ENCODE measurements at regions of chr9 and their contacts with region 1.

Region 1: GRCh38 chr9:127785023-127785932 is 556 bp upstream of the CDK9 start:
- DNase-seq: peak; percentile 92
- ATAC-seq: peak; percentile 56
- H3K4me3 Mint-ChIP-seq: peak overlapping the region; percentile 92
- H3K27ac Mint-ChIP-seq: peak overlapping the region; percentile 97
- H3K4me1 Mint-ChIP-seq: peaks cover 63% of the 10 kb centered on the region
- H3K27me3 Mint-ChIP-seq: no peaks in the 10 kb centered on the region
- CTCF ChIP-seq: peak; percentile 43

Region 2: GRCh38 chr9:127503947-127504782 is 281.1 kb before region 1 on chr9:
- CTCF ChIA-PET with region 1: interaction called, 3 read pairs
- POLR2A ChIA-PET with region 1: no interaction called
- intact Hi-C with region 1: loop called (anchors 1 kb)
- DNase-seq: peak; percentile 60
- ATAC-seq: peak; percentile 93
- H3K4me3 Mint-ChIP-seq: no peak overlapping the region
- H3K27ac Mint-ChIP-seq: no peak overlapping the region
- H3K4me1 Mint-ChIP-seq: no peaks in the 10 kb centered on the region
- H3K27me3 Mint-ChIP-seq: no peaks in the 10 kb centered on the region
- CTCF ChIP-seq: no peak

Region 3: DNA sequence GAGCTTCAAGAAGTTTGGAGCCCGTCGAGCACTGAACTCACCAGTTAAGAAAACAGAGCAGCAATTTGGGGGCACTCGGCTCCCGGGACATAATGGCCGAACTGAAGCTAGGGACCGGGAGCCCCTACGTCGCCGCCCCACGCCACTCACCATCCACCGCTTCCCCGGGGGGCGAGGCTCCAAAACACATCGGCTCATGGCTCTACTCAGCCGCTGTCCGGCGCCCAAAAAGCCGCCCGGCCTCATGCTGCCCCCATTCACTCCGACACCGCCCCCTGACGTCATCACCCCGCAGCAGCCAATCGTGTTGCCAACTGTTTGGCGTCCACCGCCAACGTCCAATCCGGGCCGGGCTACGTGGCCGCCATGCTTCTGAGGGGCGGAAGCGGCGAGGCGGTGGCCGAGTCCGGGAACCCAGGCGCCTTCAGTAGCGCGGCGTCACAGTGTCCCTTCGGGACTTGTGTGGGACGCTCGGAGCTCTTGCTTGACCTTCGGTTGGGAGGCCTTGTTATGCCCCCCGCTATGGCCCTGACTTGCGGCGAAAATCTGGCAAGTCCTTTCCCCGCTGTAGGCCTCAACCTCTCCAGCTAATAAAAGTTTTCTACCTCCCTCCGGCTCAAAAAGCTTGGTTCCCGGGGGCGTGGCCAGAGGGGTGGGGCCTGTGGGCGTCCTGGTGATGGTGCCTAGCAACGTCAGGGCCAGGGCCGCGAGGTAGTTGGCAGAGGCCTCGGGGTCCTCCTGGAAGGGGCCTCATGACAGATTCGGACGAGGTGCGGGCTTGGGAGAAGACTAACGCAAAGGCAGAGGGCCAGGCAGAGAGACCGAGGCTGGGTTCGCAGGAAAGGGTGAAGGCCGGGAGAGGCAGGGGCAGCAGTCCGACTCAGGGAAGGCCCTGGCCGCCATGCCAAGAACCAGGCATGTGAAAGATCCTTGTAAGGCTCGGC is 69.6 kb before region 1 on chr9 and contains the starts of genes PTRH1 and TTC16:
- CTCF ChIA-PET with region 1: no interaction called
- POLR2A ChIA-PET with region 1: no interaction called
- intact Hi-C with region 1: loop called (anchors 1 kb)
- DNase-seq: peak; percentile 97
- ATAC-seq: peak; percentile 96
- H3K4me3 Mint-ChIP-seq: peak within 1 kb of the TSS; percentile 100
- H3K27ac Mint-ChIP-seq: peak within 1 kb of the TSS; percentile 92
- H3K4me1 Mint-ChIP-seq: peaks cover 21% of the 10 kb centered on the region
- H3K27me3 Mint-ChIP-seq: no peaks in the 10 kb centered on the region
- CTCF ChIP-seq: no peak
- total RNA-seq, gene PTRH1: 12.7 and 13.8 TPM in 2 replicates
- total RNA-seq, gene TTC16: not detected in 2 replicates

Region 4: DNA sequence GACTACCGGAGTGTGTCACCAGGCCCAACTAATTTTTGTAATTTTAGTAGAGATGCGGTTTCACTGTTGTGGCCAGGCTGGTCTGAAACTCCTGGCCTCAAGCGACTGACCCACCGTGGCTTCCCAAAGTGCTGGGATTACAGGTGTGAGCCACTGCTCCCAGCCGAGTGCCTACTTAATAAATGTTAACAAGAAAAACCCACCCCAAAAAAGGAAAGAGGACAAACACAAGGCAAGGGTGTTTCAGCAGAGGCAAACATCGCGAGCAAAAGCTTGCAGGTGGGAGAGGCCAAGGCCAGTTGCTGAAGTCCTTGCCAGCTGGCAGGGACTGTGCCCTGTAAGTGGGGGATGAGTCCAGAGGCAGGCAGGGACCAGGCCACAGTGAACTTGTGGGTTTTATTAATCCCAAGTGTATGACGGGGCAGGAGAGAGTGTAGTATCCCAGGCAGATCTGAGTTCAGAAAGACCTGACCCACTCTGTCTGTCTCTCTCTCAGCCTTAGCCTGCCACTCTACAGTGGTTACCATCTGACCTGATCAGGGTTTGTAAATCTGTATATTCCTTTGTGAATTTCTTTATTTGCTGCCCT is 11.0 kb after region 1 on chr9:
- CTCF ChIA-PET with region 1: interaction called, 4 read pairs
- POLR2A ChIA-PET with region 1: interaction called, 14 read pairs
- intact Hi-C with region 1: loop called (anchors 1 kb)
- DNase-seq: no peak
- ATAC-seq: peak; percentile 45
- H3K4me3 Mint-ChIP-seq: peak overlapping the region; percentile 64
- H3K27ac Mint-ChIP-seq: peak overlapping the region; percentile 75
- H3K4me1 Mint-ChIP-seq: peaks cover 32% of the 10 kb centered on the region
- H3K27me3 Mint-ChIP-seq: no peaks in the 10 kb centered on the region
- CTCF ChIP-seq: no peak

Region 5: GRCh38 chr9:128047205-128047604 is 261.9 kb after region 1 on chr9:
- CTCF ChIA-PET with region 1: no interaction called
- POLR2A ChIA-PET with region 1: interaction called, 18 read pairs
- intact Hi-C with region 1: no loop called
- DNase-seq: no peak
- ATAC-seq: no peak
- H3K4me3 Mint-ChIP-seq: no peak overlapping the region
- H3K27ac Mint-ChIP-seq: no peak overlapping the region
- H3K4me1 Mint-ChIP-seq: no peaks in the 10 kb centered on the region
- H3K27me3 Mint-ChIP-seq: no peaks in the 10 kb centered on the region
- CTCF ChIP-seq: no peak

Measured in activated B cell treated with CpG ODN at 0.5 μM for 24 hours (primary cell).